ENCODE measurements at regions of chr12 and their contacts with region 1.

Region 1: GRCh38 chr12:51823875-51824565 is 24.5 kb downstream of the FIGNL2 start:
- DNase-seq: peak; percentile 82
- H3K4me3 ChIP-seq: no peak overlapping the region
- H3K27ac ChIP-seq: no peak overlapping the region
- H3K4me1 ChIP-seq: no peaks in the 10 kb centered on the region
- H3K27me3 ChIP-seq: no peaks in the 10 kb centered on the region
- CTCF ChIP-seq: peak; percentile 70

Region 2: DNA sequence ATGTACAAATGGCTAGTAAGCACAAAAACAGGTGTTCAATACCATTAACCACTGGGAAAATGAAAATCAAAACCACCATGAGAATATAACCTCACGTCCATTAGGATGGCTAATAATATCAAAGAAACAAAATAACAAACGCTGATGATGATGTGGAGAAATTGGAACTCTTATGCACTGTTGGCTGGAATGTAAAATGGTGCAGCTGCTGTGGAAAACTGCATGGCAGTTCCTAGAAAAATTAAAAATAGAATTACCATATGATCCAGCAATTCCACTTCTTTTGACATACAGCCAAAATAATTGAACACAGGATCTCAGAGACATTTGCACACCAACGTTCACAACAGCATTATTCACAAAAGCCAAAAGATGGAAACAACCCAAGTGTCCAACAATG is 929.8 kb before region 1 on chr12:
- CTCF ChIA-PET with region 1: no interaction called
- POLR2A ChIA-PET with region 1: no interaction called
- intact Hi-C with region 1: no loop called
- DNase-seq: no peak
- H3K4me3 ChIP-seq: no peak overlapping the region
- H3K27ac ChIP-seq: no peak overlapping the region
- H3K4me1 ChIP-seq: no peaks in the 10 kb centered on the region
- H3K27me3 ChIP-seq: no peaks in the 10 kb centered on the region
- CTCF ChIP-seq: no peak

Region 3: DNA sequence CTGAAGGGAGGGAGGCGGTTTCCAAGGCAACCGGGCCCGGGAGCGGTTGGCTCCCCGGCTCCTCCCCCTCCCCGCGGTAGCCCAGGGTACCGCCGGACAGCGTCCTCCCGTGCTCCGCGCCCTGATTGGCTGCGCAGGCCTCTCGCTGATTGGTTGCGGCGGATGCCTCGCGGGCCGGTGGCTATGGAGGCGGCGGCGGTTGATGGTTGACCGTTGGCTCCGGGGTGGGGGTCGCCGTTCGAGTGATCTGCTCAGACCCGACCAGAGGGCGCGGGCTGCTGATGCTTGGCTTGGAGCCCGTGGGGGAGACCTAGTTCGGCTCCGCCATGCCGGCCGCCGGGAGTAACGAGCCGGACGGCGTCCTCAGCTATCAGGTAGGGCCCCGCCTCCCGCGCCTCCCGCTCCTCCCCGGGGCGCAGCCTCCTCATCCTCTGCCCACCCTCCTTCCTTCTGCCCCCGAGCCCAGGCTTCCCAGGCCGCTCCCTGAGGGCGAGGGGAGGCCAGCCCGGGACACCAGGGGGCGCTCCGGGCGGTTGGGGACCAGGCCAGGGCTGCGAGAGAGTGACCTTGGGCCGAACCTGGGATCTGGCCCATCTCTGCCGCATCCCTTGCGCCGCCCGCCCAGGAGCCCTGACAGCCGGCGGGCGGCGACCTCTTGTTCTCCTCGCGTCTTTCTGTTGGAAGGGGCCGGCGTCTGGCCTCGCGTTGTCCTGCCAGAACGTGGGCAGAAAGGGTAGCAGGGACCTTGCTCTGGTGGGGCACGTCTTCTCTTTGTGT is 399.2 kb before region 1 on chr12 and contains the start of gene SLC4A8:
- CTCF ChIA-PET with region 1: interaction called, 7 read pairs
- POLR2A ChIA-PET with region 1: no interaction called
- intact Hi-C with region 1: loop called (anchors 2 kb)
- DNase-seq: peak; percentile 86
- H3K4me3 ChIP-seq: peak within 1 kb of the TSS; percentile 40
- H3K27ac ChIP-seq: no peak within 1 kb of the TSS
- H3K4me1 ChIP-seq: peaks cover 4% of the 10 kb centered on the region
- H3K27me3 ChIP-seq: peaks cover 9% of the 10 kb centered on the region
- CTCF ChIP-seq: peak; percentile 76
- total RNA-seq, gene SLC4A8: 0.73 and 1.1 TPM in 2 replicates

Region 4: DNA sequence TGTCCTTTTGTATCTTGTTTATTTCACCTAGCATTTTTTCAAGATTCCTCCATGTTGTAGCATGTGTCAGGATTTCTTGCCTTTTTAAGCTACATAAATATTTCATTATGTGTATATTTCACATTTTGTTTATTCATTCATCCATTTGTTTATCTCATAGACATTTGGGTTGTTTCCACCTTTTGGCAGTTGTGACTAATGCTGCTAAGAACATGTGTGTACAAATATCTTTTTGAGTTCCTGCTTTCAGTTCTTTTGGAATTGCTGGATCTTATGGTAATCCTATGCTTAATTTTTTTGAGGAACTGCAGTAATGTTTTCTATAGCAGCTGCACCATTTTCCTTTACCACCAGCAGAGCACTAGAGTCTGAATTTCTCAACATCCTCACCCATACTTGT is 170.6 kb before region 1 on chr12:
- CTCF ChIA-PET with region 1: no interaction called
- POLR2A ChIA-PET with region 1: no interaction called
- intact Hi-C with region 1: no loop called
- DNase-seq: no peak
- H3K4me3 ChIP-seq: no peak overlapping the region
- H3K27ac ChIP-seq: no peak overlapping the region
- H3K4me1 ChIP-seq: no peaks in the 10 kb centered on the region
- H3K27me3 ChIP-seq: no peaks in the 10 kb centered on the region
- CTCF ChIP-seq: no peak

Region 5: DNA sequence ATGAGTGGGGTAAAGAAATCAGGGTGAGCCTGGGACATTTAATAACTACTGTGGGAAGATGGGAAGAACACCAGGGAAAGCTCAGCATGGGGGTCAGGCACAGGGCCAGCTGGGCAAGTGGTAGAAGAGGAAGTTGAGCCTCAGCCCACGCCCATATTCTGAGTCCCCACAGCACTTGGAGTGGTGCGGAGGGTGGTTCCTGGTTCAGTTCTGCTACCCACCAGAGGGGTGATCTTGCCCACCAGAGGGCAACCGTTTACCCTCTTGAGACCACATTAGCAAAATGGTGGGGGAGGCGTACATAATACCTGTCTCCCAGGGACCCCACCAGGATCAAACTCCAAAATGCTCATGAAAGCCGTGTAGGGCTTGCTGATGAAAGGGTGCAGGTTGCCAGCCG is 47.1 kb after region 1 on chr12:
- CTCF ChIA-PET with region 1: interaction called, 11 read pairs
- POLR2A ChIA-PET with region 1: no interaction called
- intact Hi-C with region 1: loop called (anchors 5 kb)
- DNase-seq: no peak
- H3K4me3 ChIP-seq: no peak overlapping the region
- H3K27ac ChIP-seq: no peak overlapping the region
- H3K4me1 ChIP-seq: peaks cover 25% of the 10 kb centered on the region
- H3K27me3 ChIP-seq: no peaks in the 10 kb centered on the region
- CTCF ChIP-seq: no peak

Region 6: DNA sequence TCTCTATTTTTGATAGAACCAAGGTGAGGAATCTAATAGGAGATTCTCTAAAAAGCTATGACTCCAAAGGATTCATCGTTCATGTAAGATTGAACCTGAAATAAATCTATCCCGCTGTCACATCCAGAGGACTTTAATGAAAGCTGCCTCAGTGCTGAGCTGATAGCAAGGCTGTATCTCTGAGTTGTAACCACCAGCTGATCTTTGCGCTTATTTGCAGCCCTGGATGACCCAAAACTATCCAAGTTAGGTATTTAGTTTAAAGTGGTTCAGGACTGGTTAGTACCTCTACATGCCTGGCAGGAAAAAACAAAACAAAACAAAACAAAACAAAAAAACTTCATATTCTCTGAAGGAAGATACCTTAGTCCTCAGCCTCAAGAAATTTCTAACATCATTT is 55.1 kb after region 1 on chr12:
- CTCF ChIA-PET with region 1: interaction called, 11 read pairs
- POLR2A ChIA-PET with region 1: no interaction called
- intact Hi-C with region 1: loop called (anchors 5 kb)
- DNase-seq: no peak
- H3K4me3 ChIP-seq: no peak overlapping the region
- H3K27ac ChIP-seq: no peak overlapping the region
- H3K4me1 ChIP-seq: peaks cover 5% of the 10 kb centered on the region
- H3K27me3 ChIP-seq: no peaks in the 10 kb centered on the region
- CTCF ChIP-seq: no peak